Dorsolateral prefrontal cortex (tissue), 120 donors: ENCODE measurements at regions of chr16 and their contacts with region 1.

Region 1: DNA sequence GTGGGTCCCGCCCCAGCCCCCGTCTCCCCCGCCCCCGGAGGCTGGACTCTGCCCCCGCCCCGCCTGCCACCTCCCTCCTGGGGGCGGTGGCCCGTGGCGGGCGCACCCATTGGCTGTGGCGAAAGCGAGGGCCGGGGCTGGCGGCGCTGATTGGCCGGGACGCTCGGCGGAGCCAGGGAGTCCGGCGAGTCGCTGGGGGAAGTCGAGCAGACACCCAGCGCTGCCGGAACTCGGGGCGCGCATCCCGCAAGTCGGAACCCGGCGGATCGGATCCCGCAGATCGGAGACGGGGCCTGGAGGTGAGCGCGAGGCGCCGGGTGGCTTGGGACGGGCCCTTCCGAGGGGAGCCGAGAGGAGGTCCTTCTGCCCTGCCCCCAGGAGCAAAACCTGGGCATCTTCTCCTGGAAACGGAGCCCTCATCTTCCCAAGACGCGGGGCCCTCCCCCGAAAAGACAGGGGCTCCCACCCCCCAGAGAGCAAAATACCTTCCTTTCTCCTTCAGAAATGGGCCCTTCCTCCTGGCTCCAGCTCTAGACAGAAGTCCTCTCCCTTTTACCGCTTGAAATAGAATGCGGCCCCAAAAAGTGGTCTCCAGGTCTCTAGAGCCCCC is at the start of gene ABAT:
- DNase-seq: peak; percentile 86 to 99 (median 92)
- H3K4me3 ChIP-seq: peak within 1 kb of the TSS; percentile 62 to 98 (median 85)
- H3K27ac ChIP-seq: peak within 1 kb of the TSS in 46 of 59 donors; percentile 2 to 85 (median 65)
- H3K27me3 ChIP-seq: no peaks in the 10 kb centered on the region
- CTCF ChIP-seq: peak in 21 of 56 donors; percentile 11 to 39 (median 22)
- total RNA-seq, gene ABAT: 83.4 to 281 (median 204) TPM

Region 2: GRCh38 chr16:8075271-8075670 is 599.2 kb before region 1 on chr16:
- intact Hi-C with region 1: no loop called
- DNase-seq: peak in 2 of 10 donors; percentile 29 to 36
- H3K4me3 ChIP-seq: no peak overlapping the region
- H3K27ac ChIP-seq: no peak overlapping the region
- H3K27me3 ChIP-seq: no peaks in the 10 kb centered on the region
- CTCF ChIP-seq: no peak

Region 3: DNA sequence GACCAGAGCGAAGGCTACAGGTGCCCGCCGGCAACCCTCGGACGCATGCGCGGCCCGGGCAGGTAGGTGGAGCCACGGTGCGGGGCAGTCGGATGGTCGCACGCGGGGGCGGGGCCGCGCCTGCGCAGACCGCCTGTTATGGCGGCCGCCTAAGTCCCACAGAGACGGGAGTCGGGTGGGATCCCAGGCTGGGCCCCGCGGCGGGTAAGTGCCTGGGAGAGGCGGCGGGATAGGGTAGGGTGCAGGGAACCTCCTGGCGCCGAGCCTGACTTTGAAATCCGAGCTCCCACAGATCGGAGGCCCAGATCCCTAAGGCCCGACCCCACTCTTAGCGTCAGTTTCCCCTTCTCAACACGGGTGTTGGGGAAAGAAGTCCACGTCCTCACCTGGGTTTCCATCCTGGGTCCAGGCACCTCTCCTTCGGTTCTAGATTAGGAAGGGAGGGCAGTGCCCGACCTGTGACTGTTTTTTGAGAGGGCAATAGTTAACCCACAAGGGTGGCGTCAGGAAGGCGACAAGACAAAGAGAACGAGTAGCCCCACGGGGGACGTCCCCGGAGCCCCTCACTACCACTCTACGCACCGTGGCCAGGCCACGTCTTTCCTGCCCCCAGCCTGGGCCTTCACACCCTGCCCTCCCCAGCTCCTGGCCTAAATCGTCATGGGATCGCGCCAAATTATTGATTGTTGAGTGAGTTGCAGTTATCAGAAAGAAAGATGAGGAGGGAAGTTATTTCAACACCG is 52.8 kb before region 1 on chr16 and contains the start of gene METTL22:
- intact Hi-C with region 1: loop called in 1 of 2 experiments (anchors 2 kb)
- DNase-seq: peak; percentile 83 to 94 (median 88)
- H3K4me3 ChIP-seq: peak within 1 kb of the TSS; percentile 46 to 100 (median 91)
- H3K27ac ChIP-seq: peak within 1 kb of the TSS in 53 of 59 donors; percentile 7 to 93 (median 72)
- H3K27me3 ChIP-seq: no peaks in the 10 kb centered on the region
- CTCF ChIP-seq: peak in 32 of 56 donors; percentile 1 to 54 (median 24)
- total RNA-seq, gene METTL22: 22.8 to 59.0 (median 39.5) TPM

Region 4: DNA sequence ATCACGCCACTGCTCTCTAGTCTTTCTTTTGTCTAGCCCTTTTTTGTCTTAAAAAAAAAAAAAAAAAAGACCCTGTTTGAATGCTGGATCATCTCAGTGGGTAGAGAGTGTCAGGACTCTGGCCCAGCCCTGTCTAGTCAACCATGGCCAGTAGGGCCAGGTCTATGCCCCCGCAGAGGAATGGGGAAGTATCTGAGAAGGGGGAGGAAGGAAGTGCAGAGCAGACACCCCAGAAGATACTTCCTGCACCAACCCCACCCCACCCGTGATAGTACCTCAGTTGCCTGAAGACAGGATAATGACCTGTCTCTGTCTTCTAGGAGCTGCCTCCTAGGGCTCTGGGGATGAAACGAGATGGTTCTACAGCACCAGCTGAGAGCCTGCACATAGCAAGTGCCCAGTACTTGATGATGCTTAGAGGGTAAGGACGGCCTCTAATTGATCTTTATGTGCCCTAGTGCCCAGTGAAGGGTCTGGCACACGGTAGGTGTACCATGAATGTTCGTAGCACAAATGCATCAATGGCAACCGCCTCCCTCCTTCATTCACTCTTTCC is 55.3 kb after region 1 on chr16:
- intact Hi-C with region 1: loop called in 1 of 2 experiments (anchors 5 kb)
- DNase-seq: no peak
- H3K4me3 ChIP-seq: no peak overlapping the region
- H3K27ac ChIP-seq: peak overlapping the region in 1 of 59 donors; percentile 11
- H3K27me3 ChIP-seq: no peaks in the 10 kb centered on the region
- CTCF ChIP-seq: no peak

Region 5: GRCh38 chr16:8776129-8776584 is 101.6 kb after region 1 on chr16:
- intact Hi-C with region 1: no loop called
- DNase-seq: no peak
- H3K4me3 ChIP-seq: no peak overlapping the region
- H3K27ac ChIP-seq: no peak overlapping the region
- H3K27me3 ChIP-seq: no peaks in the 10 kb centered on the region
- CTCF ChIP-seq: no peak